Breast epithelium (tissue), 4 donors: ENCODE measurements at regions of chr2 and their contacts with region 1.

Region 1: DNA sequence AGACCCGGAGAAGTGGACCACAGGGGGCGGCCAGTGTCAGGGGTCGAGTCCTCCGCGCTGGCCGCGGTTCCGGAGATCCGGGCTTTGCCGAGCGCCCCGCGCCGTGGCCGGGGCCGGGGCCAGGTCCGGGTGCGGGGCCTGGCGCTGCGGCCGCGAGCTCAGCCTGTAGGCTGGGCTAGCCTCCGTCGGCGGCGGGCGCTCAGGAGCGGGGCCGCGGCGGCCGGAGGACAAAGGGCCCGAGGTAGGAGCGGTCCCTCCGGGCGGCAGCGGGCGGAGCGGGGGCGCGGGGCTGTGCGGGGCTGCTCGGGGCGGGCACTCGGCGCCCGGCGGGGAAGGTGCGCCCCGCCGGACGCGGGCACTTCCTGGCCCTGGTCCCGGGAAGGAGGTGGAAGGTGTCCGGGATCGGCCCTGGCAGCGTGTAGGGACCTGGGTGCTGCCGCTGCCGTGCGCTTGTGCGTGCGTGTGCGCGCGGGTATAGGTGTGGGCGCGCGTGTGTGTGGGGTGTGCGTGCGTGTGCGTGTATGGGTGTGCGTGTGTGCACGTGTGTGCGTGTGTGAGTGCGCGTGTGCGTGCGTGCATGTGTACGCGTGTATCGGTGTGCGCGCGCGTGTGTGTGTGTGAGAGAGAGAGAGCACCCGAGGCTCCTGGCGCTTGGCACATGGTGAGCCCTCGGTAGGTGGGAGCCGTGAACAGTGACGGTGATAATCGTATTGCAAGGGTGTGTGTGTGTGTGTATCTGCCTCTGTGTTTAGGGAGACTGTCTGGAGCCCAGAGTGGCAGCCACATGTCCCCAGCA is 17.0 kb upstream of the E2F6 start:
- DNase-seq: no peak
- H3K4me3 ChIP-seq: peak overlapping the region; percentile 50 to 89 (median 71)
- H3K27ac ChIP-seq: peak overlapping the region; percentile 69 to 89
- H3K4me1 ChIP-seq: no peaks in the 10 kb centered on the region
- H3K27me3 ChIP-seq: no peaks in the 10 kb centered on the region
- CTCF ChIP-seq: no peak
- POLR2A ChIP-seq: no peak

Region 2: DNA sequence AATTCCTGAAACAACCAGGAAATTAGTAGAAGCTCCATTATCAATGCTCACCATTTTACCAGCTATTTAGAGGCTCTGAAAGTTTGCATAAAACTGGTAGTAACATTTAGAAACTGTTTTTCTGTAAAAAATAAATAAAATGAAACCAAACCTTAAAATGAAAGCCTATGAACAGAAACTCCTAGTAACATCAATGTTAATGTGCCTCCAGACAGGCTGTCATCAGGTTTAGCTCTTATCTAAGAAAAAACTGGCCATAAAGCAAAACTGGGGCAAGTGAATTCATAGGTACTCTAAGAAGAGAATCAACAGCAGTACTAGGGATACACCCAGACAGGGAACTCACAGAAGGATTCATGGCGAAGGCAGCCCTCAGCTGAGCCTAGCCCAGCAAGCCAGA is 25.0 kb before region 1 on chr2:
- intact Hi-C with region 1: no loop called
- DNase-seq: no peak
- H3K4me3 ChIP-seq: no peak overlapping the region
- H3K27ac ChIP-seq: no peak overlapping the region
- H3K4me1 ChIP-seq: no peaks in the 10 kb centered on the region
- H3K27me3 ChIP-seq: no peaks in the 10 kb centered on the region
- CTCF ChIP-seq: no peak
- POLR2A ChIP-seq: no peak

Region 3: GRCh38 chr2:11583840-11584524 is 101.1 kb after region 1 on chr2:
- intact Hi-C with region 1: loop called (anchors 5 kb)
- DNase-seq: peak; percentile 60 to 73
- H3K4me3 ChIP-seq: no peak overlapping the region
- H3K27ac ChIP-seq: peak overlapping the region; percentile 56 to 91
- H3K4me1 ChIP-seq: peaks cover 7 to 16% of the 10 kb centered on the region in 2 donors
- H3K27me3 ChIP-seq: no peaks in the 10 kb centered on the region
- CTCF ChIP-seq: peak; percentile 76 to 88 (median 87)
- POLR2A ChIP-seq: no peak